Heart left ventricle (tissue), 16 donors: ENCODE measurements at regions of chr2 and their contacts with region 1.

Region 1: DNA sequence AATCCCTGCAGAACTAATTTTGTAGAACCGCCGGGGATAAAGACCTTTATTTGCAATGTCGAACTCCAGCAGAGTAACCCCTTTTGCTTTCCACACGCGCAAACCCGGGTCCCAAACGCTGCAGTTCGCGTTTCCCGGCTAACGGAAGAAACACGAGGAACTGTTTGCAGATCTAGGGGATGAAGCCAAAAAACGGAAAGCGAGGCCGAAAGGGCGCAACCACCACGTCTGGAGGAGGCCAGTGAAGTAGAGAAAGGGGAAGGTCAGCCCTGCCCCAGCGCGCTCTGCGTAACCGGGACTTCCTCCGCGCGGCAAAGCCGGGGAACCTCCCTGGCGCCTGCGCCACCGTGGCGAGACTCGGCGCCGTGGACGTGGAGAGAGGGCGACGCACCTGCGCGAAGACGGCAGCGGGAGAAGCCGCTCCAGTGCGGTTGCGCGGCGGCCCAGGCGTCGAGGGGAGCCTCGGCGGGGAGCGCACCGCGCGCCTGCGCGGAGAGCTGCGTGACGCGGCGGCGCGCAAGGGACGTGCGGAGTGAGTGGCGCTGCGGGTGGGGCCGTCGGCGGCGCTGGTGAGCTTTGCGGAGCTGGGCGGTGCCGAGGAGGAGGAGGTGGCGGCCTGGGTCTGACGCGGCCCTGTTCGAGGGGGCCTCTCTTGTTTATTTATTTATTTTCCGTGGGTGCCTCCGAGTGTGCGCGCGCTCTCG is at the start of gene PPP1CB:
- DNase-seq: peak; percentile 97 to 98 (median 98)
- ATAC-seq: peak; percentile 88 to 97 (median 92)
- H3K4me3 ChIP-seq: peak within 1 kb of the TSS; percentile 90 to 100 (median 94)
- H3K27ac ChIP-seq: peak within 1 kb of the TSS; percentile 98 to 100 (median 100)
- H3K4me1 ChIP-seq: peaks cover 7 to 59% (median 36%) of the 10 kb centered on the region in 12 donors
- H3K27me3 ChIP-seq: no peaks in the 10 kb centered on the region
- CTCF ChIP-seq: peak in 11 of 12 donors; percentile 12 to 55 (median 29)
- POLR2A ChIP-seq: peak in 1 of 2 donors; percentile 89
- total RNA-seq, gene PPP1CB: 204 to 496 (median 427) TPM

Region 2: GRCh38 chr2:28566521-28567041 is 184.8 kb before region 1 on chr2:
- intact Hi-C with region 1: loop called in 5 of 10 experiments (anchors 2 to 10 kb)
- DNase-seq: peak; percentile 85 to 94 (median 87)
- ATAC-seq: peak; percentile 85 to 96 (median 95)
- H3K4me3 ChIP-seq: peak overlapping the region; percentile 21 to 69 (median 61)
- H3K27ac ChIP-seq: peak overlapping the region in 11 of 12 donors; percentile 11 to 77 (median 47)
- H3K4me1 ChIP-seq: peaks cover 0 to 10% (median 0%) of the 10 kb centered on the region in 12 donors
- H3K27me3 ChIP-seq: no peaks in the 10 kb centered on the region
- CTCF ChIP-seq: peak; percentile 98 to 100 (median 99)
- POLR2A ChIP-seq: peak in 1 of 2 donors; percentile 26

Region 3: DNA sequence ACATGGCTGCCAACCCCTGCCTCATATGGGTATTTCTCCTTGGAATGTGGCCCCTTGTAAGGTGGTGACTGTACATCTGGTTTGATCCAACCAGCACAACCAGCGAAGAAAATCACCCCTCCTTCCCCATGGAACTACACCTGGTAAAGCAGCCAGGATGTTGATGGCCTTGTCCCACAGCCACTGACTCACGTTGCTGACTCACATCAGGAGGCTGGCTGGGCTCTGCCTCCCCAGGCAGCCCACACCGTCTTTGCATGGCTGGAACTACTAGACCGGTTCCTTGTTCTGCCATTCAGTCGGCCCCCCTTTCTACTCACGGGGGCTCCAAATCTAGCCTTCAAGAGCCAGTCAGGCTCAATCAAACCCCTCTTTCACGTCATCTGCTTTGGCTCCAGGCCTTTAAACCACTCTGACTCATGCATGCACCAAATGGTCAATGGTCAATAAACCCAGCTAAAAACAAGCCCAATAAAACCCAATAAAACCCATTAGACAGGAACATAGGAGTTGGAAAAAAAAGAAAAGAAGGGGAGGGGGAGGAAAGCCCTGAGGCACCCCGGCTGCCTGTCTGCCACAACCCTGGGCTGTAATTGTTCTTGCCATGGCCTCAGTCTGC is 140.7 kb before region 1 on chr2:
- intact Hi-C with region 1: loop called in 1 of 10 experiments (anchors 5 kb)
- DNase-seq: peak in 2 of 5 donors; percentile 17 to 46
- ATAC-seq: peak in 1 of 4 donors; percentile 35
- H3K4me3 ChIP-seq: no peak overlapping the region
- H3K27ac ChIP-seq: no peak overlapping the region
- H3K4me1 ChIP-seq: peaks cover 0 to 32% (median 11%) of the 10 kb centered on the region in 12 donors
- H3K27me3 ChIP-seq: no peaks in the 10 kb centered on the region
- CTCF ChIP-seq: no peak
- POLR2A ChIP-seq: no peak

Region 4: GRCh38 chr2:28661589-28662001 is 89.8 kb before region 1 on chr2:
- intact Hi-C with region 1: loop called in 5 of 10 experiments (anchors 2 to 5 kb)
- DNase-seq: peak; percentile 74 to 80 (median 75)
- ATAC-seq: peak; percentile 73 to 83 (median 76)
- H3K4me3 ChIP-seq: no peak overlapping the region
- H3K27ac ChIP-seq: peak overlapping the region; percentile 34 to 85 (median 60)
- H3K4me1 ChIP-seq: peaks cover 8 to 62% (median 45%) of the 10 kb centered on the region in 12 donors
- H3K27me3 ChIP-seq: no peaks in the 10 kb centered on the region
- CTCF ChIP-seq: no peak
- POLR2A ChIP-seq: no peak

Region 5: DNA sequence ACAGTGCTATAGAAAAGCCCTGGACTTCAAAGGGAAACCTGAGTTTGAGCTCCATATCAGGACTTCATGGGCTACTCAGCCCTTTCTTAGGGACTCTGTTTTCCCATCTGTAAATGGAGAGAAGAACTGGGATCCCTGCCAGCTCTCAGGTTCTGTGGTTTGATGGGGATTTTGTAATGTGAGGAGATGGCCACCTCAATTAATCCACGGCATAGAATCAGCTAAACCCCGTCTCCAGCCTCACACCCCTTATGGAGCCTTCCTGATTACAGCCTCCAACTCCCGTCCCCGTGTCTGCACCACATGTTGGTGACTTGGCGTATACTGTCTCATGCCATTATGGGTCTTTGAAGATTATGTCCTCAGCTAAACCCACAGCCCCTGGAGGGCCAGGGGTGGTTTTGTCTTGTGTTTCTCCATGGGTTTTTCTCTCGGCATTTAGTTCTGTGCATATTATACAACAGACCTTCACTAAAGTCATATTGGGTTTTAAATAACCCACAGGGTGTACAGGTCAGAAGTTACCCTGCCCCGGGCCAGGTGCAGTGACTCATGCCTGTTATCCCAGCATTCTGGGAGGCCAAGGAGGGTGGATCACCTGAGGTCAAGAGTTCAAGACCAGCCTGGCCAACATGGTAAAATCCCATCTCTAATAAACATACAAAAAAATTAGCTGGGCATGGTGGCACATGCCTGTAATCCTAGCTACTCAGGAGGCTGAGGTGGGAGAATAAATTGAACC is 63.6 kb before region 1 on chr2:
- intact Hi-C with region 1: loop called in 7 of 10 experiments (anchors 2 to 5 kb)
- DNase-seq: no peak
- ATAC-seq: no peak
- H3K4me3 ChIP-seq: no peak overlapping the region
- H3K27ac ChIP-seq: no peak overlapping the region
- H3K4me1 ChIP-seq: peaks cover 10 to 40% (median 25%) of the 10 kb centered on the region in 12 donors
- H3K27me3 ChIP-seq: no peaks in the 10 kb centered on the region
- CTCF ChIP-seq: no peak
- POLR2A ChIP-seq: no peak

Region 6: DNA sequence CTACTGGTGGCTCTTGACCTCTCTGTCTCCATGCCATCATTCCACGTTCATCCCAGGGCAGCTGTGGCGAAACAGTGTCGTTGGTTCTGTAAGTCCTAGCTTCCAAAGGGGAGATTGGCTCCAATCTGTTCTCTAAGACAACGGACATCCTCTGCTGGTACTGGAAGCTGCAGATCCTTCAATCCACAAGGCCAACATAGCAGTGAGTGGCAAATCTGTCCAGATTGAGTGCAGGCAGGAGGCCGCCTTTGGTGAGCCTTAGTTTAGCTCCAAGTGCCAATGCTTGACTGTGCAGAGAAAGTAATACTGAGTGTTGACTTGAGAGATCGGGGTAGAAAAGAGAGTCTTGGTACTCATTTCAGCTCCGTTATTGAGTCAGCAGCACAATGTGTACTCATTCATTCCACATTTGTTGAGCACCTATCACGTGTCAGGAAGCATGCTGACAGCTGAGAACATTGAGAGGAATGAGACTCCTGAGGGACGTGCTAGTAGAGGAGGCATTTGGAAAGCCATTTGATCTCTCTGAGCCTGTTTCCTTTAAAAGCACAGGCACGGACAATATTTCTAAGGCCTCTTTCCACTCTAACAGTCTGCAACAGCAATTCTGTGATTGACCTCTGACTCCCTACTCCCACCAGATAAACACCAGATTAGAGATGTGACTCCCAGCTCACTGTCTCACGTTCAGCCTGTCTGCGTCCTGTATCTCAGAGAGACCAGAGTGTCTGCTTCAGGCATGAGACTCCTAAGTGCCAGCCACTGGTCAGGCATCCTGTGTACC is 669.8 kb after region 1 on chr2:
- intact Hi-C with region 1: no loop called
- DNase-seq: no peak
- ATAC-seq: peak; percentile 54 to 70 (median 58)
- H3K4me3 ChIP-seq: no peak overlapping the region
- H3K27ac ChIP-seq: no peak overlapping the region
- H3K4me1 ChIP-seq: peaks cover 0 to 10% (median 0%) of the 10 kb centered on the region in 12 donors
- H3K27me3 ChIP-seq: peaks cover 0 to 6% (median 0%) of the 10 kb centered on the region in 9 donors
- CTCF ChIP-seq: no peak
- POLR2A ChIP-seq: no peak

Region 7: DNA sequence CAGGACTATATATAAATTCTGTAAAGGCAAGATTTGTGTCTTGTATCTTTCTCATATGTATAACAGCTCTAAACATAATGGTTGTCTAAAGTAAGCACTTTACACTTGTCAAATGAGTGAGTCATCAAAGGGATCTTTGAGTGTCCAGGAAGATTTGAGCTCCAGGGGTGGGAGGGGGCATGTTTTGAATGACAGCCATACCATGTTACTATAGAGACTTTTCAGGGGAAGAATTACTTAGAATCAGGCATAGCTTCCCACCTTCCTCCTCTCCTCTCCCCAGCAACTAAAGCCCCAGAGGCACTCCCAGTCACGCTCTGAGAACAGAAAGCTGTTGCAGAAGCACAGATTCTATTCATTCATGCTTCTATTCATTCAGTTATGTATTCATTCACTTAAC is 1235.7 kb after region 1 on chr2:
- intact Hi-C with region 1: no loop called
- DNase-seq: no peak
- ATAC-seq: no peak
- H3K4me3 ChIP-seq: no peak overlapping the region
- H3K27ac ChIP-seq: no peak overlapping the region
- H3K4me1 ChIP-seq: no peaks in the 10 kb centered on the region
- H3K27me3 ChIP-seq: peaks cover 0 to 23% (median 0%) of the 10 kb centered on the region in 9 donors
- CTCF ChIP-seq: no peak
- POLR2A ChIP-seq: no peak